ENCODE measurements at regions of chr15 and their contacts with region 1.

Region 1: DNA sequence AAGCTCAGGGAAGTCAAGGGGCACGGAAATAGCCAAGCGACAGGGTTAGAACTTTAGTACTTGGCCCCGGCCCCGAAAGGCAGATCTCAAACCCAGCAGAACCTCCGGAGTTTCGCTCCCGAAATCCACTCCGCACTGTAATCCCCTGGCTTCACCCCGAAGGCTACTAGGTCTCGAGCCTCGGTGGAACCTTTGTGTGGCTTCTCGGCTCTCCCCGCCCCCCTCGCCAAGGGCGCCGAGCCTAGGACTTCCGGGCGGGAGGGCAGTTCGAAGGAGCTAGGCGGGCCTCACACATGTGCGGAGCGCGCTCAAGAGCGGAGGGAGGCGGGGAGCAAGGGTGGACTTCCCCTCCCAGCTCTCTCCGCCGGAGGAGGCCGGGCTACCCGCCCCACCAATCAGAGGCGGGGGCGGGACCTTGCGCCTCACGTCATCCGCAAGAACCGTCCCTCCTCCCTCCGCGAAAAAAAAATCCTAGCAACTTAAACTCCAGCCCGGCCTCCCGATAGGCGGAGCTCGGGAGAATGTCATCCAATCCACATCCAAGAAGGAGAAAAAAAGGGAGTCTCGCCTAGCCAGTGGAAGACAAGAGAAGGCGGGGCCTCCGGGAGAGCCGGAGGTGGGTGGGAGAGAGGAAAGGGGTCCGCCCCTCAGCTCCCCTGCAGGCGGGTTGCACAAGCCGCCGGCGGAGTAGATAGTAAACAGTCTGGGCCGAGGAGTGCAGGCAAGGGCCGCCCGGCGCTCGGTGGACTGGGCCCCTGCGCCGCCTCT is 2.4 kb upstream of the SIN3A start:
- DNase-seq: peak; percentile 98
- H3K4me3 Mint-ChIP-seq: peak overlapping the region; percentile 97
- H3K27ac Mint-ChIP-seq: peak overlapping the region; percentile 99
- H3K4me1 Mint-ChIP-seq: peaks cover 24% of the 10 kb centered on the region
- H3K27me3 Mint-ChIP-seq: no peaks in the 10 kb centered on the region

Region 2: DNA sequence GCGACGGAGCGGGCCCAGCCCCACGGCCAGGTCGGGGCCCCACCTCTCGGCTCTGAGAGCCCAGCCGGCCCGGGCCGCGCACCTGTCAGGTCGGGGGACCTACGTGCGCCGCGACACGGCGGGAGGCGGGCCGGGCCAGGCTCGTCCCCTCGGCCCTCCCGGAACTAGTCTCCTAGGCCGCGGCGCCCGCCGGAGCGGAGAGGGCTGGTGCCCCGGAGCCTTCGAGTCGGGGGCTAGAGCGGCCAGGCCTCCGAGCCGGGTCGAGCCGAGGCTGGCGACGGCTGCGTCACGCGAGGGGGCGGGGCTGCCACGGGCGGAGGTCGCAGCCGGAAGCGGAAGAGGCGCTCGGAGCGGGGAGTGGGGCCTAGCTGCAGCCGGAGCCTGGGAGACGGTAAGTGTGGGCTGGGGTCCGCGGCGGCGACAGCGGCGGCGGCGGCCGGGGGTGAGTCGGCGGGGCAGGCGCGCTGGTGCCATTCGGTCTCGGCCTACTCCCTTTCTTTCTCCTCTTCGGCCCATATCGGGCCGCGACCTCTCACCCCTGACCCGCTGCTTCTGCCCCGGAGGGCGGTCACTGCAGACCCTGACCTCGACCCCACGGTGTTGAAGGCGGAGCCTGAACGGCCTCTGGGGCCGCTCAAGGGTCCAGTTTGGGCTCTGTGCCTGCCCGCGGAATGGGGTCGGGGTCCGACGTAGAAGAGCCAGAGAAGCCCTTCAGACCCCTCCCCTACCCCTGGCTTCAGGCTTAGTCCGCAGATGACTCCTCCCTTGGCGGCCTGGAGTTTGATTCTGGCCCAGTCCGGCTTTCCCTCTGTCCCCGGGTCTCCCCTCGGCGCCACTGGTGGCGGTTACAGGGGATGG is 838.1 kb before region 1 on chr15 and contains the start of gene CLK3:
- CTCF ChIA-PET with region 1: no interaction called
- POLR2A ChIA-PET with region 1: no interaction called
- intact Hi-C with region 1: loop called (anchors 2 kb)
- DNase-seq: peak; percentile 97
- H3K4me3 Mint-ChIP-seq: peak within 1 kb of the TSS; percentile 91
- H3K27ac Mint-ChIP-seq: peak within 1 kb of the TSS; percentile 94
- H3K4me1 Mint-ChIP-seq: peaks cover 35% of the 10 kb centered on the region
- H3K27me3 Mint-ChIP-seq: no peaks in the 10 kb centered on the region
- total RNA-seq, gene CLK3: 118 to 124 TPM

Region 3: GRCh38 chr15:74873036-74873755 is 580.7 kb before region 1 on chr15 and contains the start of gene SCAMP2:
- CTCF ChIA-PET with region 1: no interaction called
- POLR2A ChIA-PET with region 1: no interaction called
- intact Hi-C with region 1: loop called (anchors 5 kb)
- DNase-seq: peak; percentile 93
- H3K4me3 Mint-ChIP-seq: peak within 1 kb of the TSS; percentile 96
- H3K27ac Mint-ChIP-seq: peak within 1 kb of the TSS; percentile 90
- H3K4me1 Mint-ChIP-seq: peaks cover 45% of the 10 kb centered on the region
- H3K27me3 Mint-ChIP-seq: no peaks in the 10 kb centered on the region
- total RNA-seq, gene SCAMP2: 77.6 to 79.5 TPM

Region 4: GRCh38 chr15:75347879-75348561 is 105.9 kb before region 1 on chr15:
- CTCF ChIA-PET with region 1: no interaction called
- POLR2A ChIA-PET with region 1: interaction called, 5 read pairs
- intact Hi-C with region 1: loop called (anchors 2 kb)
- DNase-seq: peak; percentile 26
- H3K4me3 Mint-ChIP-seq: peak overlapping the region; percentile 79
- H3K27ac Mint-ChIP-seq: no peak overlapping the region
- H3K4me1 Mint-ChIP-seq: peaks cover 28% of the 10 kb centered on the region
- H3K27me3 Mint-ChIP-seq: no peaks in the 10 kb centered on the region

Region 5: DNA sequence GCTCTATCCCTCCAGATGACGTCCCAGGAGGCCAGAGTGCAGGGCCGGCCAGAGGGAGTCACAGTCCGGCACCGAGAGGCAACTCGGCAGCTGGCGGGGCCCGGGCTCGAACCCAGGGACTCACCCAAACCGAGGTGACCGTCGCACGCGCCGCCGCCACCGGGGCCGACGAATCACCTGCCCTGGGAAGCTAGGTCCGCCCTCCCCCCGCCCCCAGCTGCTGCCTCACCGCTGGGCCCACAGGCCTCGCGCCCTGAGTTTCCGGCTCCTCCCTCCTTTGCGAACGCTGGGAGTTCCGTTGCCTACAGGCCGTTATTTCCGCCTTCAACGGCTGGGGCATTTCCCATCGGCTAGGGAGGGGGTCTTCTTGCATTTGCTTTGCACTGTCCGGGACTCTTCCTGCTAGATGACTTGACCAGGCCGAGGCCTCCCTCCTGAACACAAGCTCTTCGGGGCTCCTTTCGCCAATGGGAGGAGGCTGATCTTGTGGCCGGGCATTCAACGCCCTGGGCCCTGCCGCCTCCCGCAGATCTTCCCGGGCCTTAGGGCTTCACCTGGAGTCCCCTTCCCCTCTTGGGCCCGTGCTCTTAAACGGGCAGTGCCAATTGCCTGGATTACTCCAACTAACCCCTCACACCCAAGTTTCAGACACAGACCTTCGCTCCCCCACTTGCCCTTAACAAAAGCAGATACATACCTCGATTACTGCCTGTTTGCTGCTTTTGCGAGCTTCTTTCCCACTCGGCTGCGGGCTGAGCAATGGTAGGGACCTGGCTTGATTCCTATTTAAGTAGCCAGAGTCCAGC is 171.9 kb after region 1 on chr15 and contains the start of gene SNUPN:
- CTCF ChIA-PET with region 1: interaction called, 3 read pairs
- POLR2A ChIA-PET with region 1: interaction called, 39 read pairs
- intact Hi-C with region 1: loop called (anchors 1 kb)
- DNase-seq: peak; percentile 97
- H3K4me3 Mint-ChIP-seq: peak within 1 kb of the TSS; percentile 98
- H3K27ac Mint-ChIP-seq: peak within 1 kb of the TSS; percentile 98
- H3K4me1 Mint-ChIP-seq: peaks cover 35% of the 10 kb centered on the region
- H3K27me3 Mint-ChIP-seq: no peaks in the 10 kb centered on the region
- total RNA-seq, gene SNUPN: 33.4 to 34.2 TPM

Region 6: GRCh38 chr15:76994971-76995945 is 1541.4 kb after region 1 on chr15 and contains the start of gene PSTPIP1:
- CTCF ChIA-PET with region 1: no interaction called
- POLR2A ChIA-PET with region 1: no interaction called
- intact Hi-C with region 1: loop called (anchors 5 kb)
- DNase-seq: peak; percentile 83
- H3K4me3 Mint-ChIP-seq: peak within 1 kb of the TSS; percentile 92
- H3K27ac Mint-ChIP-seq: peak within 1 kb of the TSS; percentile 99
- H3K4me1 Mint-ChIP-seq: peaks cover 60% of the 10 kb centered on the region
- H3K27me3 Mint-ChIP-seq: no peaks in the 10 kb centered on the region
- total RNA-seq, gene PSTPIP1: 155 to 164 TPM

Measured in activated CD4-positive, alpha-beta memory T cell treated with anti-CD3 and anti-CD28 coated beads for 36 hours (primary cell).